Heart right ventricle (tissue), 16 donors: ENCODE measurements at regions of chr2 and their contacts with region 1.

Region 1: DNA sequence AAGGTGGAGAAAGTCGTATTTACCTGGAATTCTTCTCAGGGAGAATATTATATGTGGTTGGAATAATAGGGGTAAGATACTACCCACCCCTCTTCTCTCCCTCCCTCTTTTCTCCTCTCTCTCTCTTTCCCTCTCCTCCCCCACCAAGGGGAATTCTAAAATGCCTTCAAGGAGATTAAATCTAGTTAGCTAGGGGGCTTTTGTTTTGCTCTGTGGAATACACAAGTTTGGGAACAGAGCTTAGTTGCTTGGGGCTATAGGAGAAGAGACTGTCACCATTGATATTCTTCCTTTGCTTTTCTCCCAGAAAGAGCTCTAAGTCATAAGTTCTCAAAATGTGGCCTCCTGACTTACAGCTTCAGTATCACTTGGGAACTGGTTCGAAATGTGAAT is 34.5 kb downstream of the TAF1B start:
- DNase-seq: no peak
- ATAC-seq: no peak
- H3K4me3 ChIP-seq: no peak overlapping the region
- H3K27ac ChIP-seq: no peak overlapping the region
- H3K4me1 ChIP-seq: no peaks in the 10 kb centered on the region
- H3K27me3 ChIP-seq: no peaks in the 10 kb centered on the region
- CTCF ChIP-seq: no peak

Region 2: GRCh38 chr2:8774371-8774770 is 1103.4 kb before region 1 on chr2:
- intact Hi-C with region 1: loop called in 1 of 10 experiments (anchors 5 kb)
- DNase-seq: no peak
- ATAC-seq: no peak
- H3K4me3 ChIP-seq: no peak overlapping the region
- H3K27ac ChIP-seq: no peak overlapping the region
- H3K4me1 ChIP-seq: peaks cover 0 to 6% (median 0%) of the 10 kb centered on the region in 9 donors
- H3K27me3 ChIP-seq: no peaks in the 10 kb centered on the region
- CTCF ChIP-seq: no peak

Region 3: DNA sequence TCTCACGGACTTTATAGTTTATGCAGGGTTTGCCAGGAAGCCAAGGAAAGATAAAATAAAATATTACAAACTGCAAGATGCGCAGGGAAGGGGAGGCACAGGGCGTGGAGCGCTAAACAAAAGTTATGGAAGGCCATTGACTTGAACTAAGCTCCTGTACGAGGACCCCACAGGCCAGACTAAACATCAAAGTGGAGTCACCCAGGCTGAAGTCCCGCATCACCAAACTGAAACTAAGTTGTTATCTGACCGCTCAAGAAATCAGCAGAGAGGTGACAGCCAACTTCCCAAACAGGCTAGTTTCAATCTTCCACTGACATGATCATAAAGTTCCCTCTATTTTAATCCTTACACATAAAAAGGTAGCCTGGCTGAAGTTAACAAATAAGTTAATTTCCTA is 156.4 kb before region 1 on chr2:
- intact Hi-C with region 1: no loop called
- DNase-seq: no peak
- ATAC-seq: no peak
- H3K4me3 ChIP-seq: no peak overlapping the region
- H3K27ac ChIP-seq: no peak overlapping the region
- H3K4me1 ChIP-seq: no peaks in the 10 kb centered on the region
- H3K27me3 ChIP-seq: no peaks in the 10 kb centered on the region
- CTCF ChIP-seq: no peak